ENCODE measurements at regions of chr7 and their contacts with region 1.

Region 1: GRCh38 chr7:64562626-64563275 is at the start of gene ZNF680:
- DNase-seq: peak; percentile 91 to 99
- H3K4me3 ChIP-seq: peak within 1 kb of the TSS; percentile 67 to 80
- H3K27ac ChIP-seq: peak within 1 kb of the TSS; percentile 79 to 89
- H3K4me1 ChIP-seq: peaks cover 2 to 26% of the 10 kb centered on the region in 2 donors
- H3K27me3 ChIP-seq: no peaks in the 10 kb centered on the region
- CTCF ChIP-seq: no peak
- total RNA-seq, gene ZNF680: 11.0 TPM

Region 2: GRCh38 chr7:64313740-64314491 is 248.8 kb before region 1 on chr7 and contains the start of gene ZNF736:
- intact Hi-C with region 1: loop called (anchors 2 kb)
- DNase-seq: peak; percentile 86 to 96
- H3K4me3 ChIP-seq: peak within 1 kb of the TSS; percentile 65 to 72
- H3K27ac ChIP-seq: peak within 1 kb of the TSS; percentile 38 to 63
- H3K4me1 ChIP-seq: peaks cover 0 to 9% of the 10 kb centered on the region in 2 donors
- H3K27me3 ChIP-seq: no peaks in the 10 kb centered on the region
- CTCF ChIP-seq: no peak
- total RNA-seq, gene ZNF736: 6.0 TPM

Region 3: GRCh38 chr7:64541438-64542359 is 21.1 kb before region 1 on chr7:
- intact Hi-C with region 1: loop called (anchors 2 kb)
- DNase-seq: peak in 1 of 2 donors; percentile 76
- H3K4me3 ChIP-seq: peak overlapping the region in 1 of 2 donors; percentile 39
- H3K27ac ChIP-seq: peak overlapping the region; percentile 35 to 69
- H3K4me1 ChIP-seq: peaks cover 4 to 13% of the 10 kb centered on the region in 2 donors
- H3K27me3 ChIP-seq: no peaks in the 10 kb centered on the region
- CTCF ChIP-seq: no peak

Region 4: DNA sequence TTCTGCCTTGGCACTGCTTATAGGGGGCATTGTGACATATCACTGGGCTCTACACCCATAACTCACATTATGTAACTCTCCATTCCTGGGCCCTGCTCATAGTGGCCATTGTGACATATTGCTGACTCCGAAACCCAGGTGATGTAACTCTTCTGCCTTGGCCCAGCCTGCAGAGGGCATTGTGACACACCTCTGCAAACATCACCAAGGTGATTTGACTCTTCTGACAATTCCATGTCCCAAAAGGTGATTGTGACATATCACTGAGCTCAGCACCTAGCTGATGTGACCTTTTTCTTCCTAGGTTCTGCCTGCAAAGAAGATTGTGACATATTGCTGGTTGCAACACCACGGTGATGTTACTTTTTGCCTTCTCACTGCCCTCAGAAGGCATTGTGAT is 36.6 kb after region 1 on chr7:
- intact Hi-C with region 1: no loop called
- DNase-seq: no peak
- H3K4me3 ChIP-seq: no peak overlapping the region
- H3K27ac ChIP-seq: no peak overlapping the region
- H3K4me1 ChIP-seq: no peaks in the 10 kb centered on the region
- H3K27me3 ChIP-seq: no peaks in the 10 kb centered on the region
- CTCF ChIP-seq: no peak

Region 5: GRCh38 chr7:64665980-64666662 is 103.4 kb after region 1 on chr7 and contains the start of gene ZNF107:
- intact Hi-C with region 1: loop called (anchors 5 kb)
- DNase-seq: peak; percentile 82 to 94
- H3K4me3 ChIP-seq: peak within 1 kb of the TSS; percentile 67 to 88
- H3K27ac ChIP-seq: peak within 1 kb of the TSS; percentile 42 to 82
- H3K4me1 ChIP-seq: no peaks in the 10 kb centered on the region
- H3K27me3 ChIP-seq: no peaks in the 10 kb centered on the region
- CTCF ChIP-seq: no peak
- total RNA-seq, gene ZNF107: 0.85 TPM

Region 6: DNA sequence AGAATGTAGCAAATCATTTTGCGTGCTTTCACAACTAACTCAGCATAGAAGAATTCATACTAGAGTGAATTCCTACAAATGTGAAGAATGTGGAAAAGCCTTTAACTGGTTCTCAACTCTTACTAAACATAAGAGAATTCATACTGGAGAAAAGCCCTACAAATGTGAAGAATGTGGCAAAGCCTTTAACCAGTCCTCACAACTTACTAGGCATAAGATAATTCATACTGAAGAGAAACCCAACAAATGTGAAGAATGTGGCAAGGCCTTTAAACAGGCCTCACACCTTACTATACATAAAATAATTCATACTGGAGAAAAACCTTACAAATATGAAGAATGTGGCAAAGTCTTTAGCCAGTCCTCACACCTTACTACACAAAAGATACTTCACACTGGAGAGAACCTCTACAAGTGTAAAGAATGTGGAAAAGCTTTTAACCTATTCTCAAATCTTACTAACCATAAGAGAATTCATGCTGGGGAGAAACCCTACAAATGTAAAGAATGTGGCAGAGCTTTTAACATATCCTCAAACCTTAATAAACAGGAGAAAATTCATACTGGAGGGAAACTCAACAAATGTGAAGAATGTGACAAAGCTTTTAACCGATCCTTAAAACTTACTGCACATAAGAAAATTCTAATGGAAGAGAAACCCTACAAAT is 144.0 kb after region 1 on chr7:
- intact Hi-C with region 1: no loop called
- DNase-seq: no peak
- H3K4me3 ChIP-seq: peak overlapping the region in 1 of 2 donors; percentile 8
- H3K27ac ChIP-seq: no peak overlapping the region
- H3K4me1 ChIP-seq: no peaks in the 10 kb centered on the region
- H3K27me3 ChIP-seq: no peaks in the 10 kb centered on the region
- CTCF ChIP-seq: no peak

Region 7: DNA sequence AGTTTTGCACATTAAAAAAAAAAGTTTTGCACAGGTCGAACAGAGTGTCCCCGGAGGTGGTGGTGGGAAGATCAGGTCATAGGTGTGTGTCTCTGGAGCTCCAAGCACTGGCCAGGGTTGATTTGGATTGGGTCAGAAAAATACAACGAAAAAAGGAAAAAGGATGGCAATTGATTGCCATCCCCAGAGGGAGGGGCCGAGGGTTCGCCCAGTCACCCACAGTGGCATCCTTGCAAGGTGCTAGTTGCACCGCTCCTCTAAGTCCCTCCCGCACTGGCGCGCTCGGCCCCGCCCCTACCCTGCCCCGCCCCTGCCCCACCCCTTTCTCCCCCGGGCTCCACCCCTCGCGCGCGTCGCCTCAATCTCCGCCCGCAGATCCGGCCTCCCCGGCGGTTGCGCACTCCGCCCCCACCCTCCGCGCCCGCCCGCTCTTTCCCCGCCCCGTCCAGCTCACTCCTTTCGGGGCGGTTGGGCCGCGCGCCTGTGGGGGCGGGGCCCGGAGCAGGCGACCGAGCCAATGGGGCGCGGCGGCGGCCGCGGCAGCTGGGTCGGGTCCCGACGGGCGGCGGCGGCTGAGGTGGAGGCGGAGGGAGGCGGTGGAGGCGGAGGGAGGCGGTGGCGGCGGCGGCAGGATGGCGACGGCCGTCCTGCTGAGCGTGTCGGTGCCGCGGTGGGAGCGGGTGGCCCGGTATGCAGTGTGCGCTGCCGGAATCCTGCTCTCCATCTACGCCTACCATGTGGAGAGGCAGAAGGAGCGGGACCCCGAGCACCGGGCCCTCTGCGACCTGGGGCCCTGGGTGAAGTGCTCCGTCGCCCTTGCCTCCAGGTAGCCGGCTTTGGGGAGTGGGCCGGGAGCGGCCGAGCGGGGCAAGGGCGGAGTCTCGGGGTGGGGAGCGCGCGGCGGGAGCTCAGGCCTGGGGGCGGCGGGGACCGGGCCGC is 475.3 kb after region 1 on chr7:
- intact Hi-C with region 1: loop called (anchors 5 kb)
- DNase-seq: peak; percentile 74 to 96
- H3K4me3 ChIP-seq: peak overlapping the region; percentile 86 to 98
- H3K27ac ChIP-seq: peak overlapping the region; percentile 86 to 87
- H3K4me1 ChIP-seq: peaks cover 0 to 5% of the 10 kb centered on the region in 2 donors
- H3K27me3 ChIP-seq: no peaks in the 10 kb centered on the region
- CTCF ChIP-seq: peak in 1 of 3 experiments; percentile 7